ENCODE measurements at regions of chr13 and their contacts with region 1.

Region 1: DNA sequence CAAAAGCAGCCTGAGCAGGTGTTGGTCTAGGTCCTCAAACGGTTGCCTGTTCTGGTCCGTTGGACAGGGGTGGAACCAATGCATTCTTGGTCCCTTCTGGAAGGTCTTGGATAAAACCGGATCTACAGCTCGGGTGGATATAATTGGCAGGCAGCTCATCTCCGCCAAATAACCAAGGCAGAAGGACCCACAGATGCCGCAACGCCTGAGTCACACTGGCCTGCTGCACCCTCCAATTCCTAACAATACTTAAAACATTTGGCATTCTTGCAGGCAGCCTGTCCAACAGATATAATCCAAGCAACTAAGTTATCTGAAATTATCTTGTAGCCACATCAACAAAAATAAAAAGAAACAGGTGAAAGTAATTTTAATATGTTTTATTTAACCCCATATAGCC is 59.0 kb upstream of the FGF14 start:
- DNase-seq: no peak

Region 2: GRCh38 chr13:102141625-102142472 is 319.0 kb before region 1 on chr13:
- intact Hi-C with region 1: loop called (anchors 5 kb)
- DNase-seq: no peak

Measured in cardiac septum (tissue), 1 donor.